Activated naive CD8-positive, alpha-beta T cell treated with anti-CD3 and anti-CD28 coated beads, Interleukin-2, amount 10 ng/mL, durations not matched to agents 7 days and 5 days (primary cell): ENCODE measurements at regions of chr20 and their contacts with region 1.

Region 1: DNA sequence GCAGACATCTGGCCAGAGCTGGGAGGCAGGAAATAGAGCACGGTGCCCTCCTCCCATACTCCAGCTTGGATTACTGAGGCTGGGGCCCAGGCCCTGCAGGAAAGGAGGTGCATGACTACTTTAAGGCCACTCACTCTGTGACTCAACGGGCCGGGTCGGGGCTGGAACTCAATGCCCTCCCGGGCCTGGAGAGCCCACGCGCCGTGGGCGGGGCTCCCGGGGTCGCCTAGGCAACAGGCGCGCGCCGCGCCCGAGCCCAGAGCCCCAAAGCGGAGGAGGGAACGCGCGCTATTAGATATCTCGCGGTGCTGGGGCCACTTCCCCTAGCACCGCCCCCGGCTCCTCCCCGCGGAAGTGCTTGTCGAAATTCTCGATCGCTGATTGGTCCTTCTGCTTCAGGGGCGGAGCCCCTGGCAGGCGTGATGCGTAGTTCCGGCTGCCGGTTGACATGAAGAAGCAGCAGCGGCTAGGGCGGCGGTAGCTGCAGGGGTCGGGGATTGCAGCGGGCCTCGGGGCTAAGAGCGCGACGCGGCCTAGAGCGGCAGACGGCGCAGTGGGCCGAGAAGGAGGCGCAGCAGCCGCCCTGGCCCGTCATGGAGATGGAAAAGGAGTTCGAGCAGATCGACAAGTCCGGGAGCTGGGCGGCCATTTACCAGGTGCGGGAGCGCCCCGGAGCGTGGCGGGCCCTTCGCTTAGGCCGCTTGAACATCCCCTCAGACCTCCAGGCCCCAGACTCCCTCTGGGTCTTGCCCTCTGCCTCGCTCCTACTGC is at the start of gene PTPN1:
- DNase-seq: peak; percentile 98
- ATAC-seq: peak; percentile 91
- H3K4me3 Mint-ChIP-seq: peak within 1 kb of the TSS; percentile 92
- H3K27ac Mint-ChIP-seq: peak within 1 kb of the TSS; percentile 88
- H3K4me1 Mint-ChIP-seq: peaks cover 46% of the 10 kb centered on the region
- H3K27me3 Mint-ChIP-seq: no peaks in the 10 kb centered on the region
- total RNA-seq, gene PTPN1: 65.9 to 67.3 TPM

Region 2: GRCh38 chr20:50484276-50484976 is 25.7 kb before region 1 on chr20:
- POLR2A ChIA-PET with region 1: interaction called, 21 read pairs
- DNase-seq: no peak
- ATAC-seq: no peak
- H3K4me3 Mint-ChIP-seq: peak overlapping the region; percentile 95
- H3K27ac Mint-ChIP-seq: peak overlapping the region; percentile 95
- H3K4me1 Mint-ChIP-seq: peaks cover 32% of the 10 kb centered on the region
- H3K27me3 Mint-ChIP-seq: no peaks in the 10 kb centered on the region

Region 3: DNA sequence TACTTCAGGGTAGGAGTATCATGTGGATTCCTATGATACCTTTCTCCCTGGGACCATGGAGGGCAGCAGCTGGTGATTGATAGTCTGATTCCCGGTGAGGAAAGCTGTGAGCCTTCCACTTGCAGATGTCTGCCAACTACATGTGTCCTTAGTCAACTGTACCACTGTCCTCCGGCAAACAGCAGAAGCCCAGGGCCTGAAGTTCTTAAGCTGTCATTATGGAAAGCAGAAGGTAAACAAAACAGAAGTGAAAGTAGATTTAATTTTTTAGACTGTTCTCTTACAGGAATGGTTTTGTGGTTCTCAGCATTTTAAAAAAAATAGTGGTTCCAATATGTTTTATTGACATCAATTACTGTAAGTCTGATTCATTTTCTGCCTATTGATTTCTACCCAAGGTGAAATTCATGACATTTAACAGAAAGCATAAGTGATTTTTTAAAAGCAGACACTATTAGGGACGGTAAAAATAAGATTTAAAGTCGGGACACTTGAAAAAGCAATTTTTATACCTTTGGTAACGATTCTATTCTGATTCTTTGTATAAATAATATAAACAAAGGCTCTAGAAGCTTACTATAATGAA is 36.7 kb after region 1 on chr20:
- POLR2A ChIA-PET with region 1: interaction called, 15 read pairs
- DNase-seq: no peak
- ATAC-seq: peak; percentile 35
- H3K4me3 Mint-ChIP-seq: peak overlapping the region; percentile 85
- H3K27ac Mint-ChIP-seq: peak overlapping the region; percentile 81
- H3K4me1 Mint-ChIP-seq: peaks cover 62% of the 10 kb centered on the region
- H3K27me3 Mint-ChIP-seq: no peaks in the 10 kb centered on the region

Region 4: GRCh38 chr20:50580016-50580747 is 70.1 kb after region 1 on chr20:
- POLR2A ChIA-PET with region 1: no interaction called
- DNase-seq: peak; percentile 59
- ATAC-seq: no peak
- H3K4me3 Mint-ChIP-seq: no peak overlapping the region
- H3K27ac Mint-ChIP-seq: no peak overlapping the region
- H3K4me1 Mint-ChIP-seq: peaks cover 7% of the 10 kb centered on the region
- H3K27me3 Mint-ChIP-seq: no peaks in the 10 kb centered on the region